Panc1 (cell line): ENCODE measurements at regions of chr18 and their contacts with region 1.

Region 1: GRCh38 chr18:46946656-46947282 is 29.4 kb downstream of the KATNAL2 start:
- DNase-seq: no peak
- ATAC-seq: no peak
- H3K4me3 ChIP-seq: peak overlapping the region in 1 of 2 experiments; percentile 41; a peak in 1 of 4 replicates
- H3K27ac ChIP-seq: no peak overlapping the region
- H3K4me1 ChIP-seq: no peaks in the 10 kb centered on the region
- H3K27me3 ChIP-seq: no peaks in the 10 kb centered on the region
- CTCF ChIP-seq: no peak

Region 2: DNA sequence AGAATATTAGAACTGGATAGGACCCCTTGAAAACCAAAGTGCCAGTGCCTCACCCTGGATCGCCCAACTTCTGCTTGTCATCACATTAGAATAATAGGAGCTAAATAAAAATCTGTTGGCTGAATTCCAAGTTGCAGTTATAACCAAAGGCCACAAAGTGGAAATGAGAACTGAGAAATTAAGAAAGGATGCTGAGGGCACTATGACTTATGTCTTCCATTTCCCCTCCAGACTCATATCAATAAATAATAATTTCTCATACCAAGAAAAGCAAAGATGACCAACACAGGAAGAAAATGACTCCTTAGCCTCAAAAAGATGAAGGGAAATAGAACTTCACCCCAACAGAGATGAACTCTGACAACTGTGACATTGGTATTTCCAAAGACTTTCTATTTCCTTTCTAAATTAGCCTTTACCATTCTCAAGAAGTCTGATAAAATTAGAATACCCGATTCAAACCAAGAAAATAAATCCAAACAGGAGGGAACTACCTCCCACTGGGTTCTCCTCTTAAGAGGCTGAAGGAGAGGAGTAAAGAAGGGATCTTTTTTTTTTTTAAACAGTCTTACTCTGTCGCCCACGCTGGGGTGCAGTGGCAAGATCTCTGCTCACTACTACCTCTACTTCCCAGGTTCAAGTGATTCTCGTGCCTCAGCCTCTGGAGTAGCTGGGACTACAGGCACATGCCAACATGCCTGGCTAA is 933.1 kb before region 1 on chr18:
- CTCF ChIA-PET with region 1: no interaction called
- POLR2A ChIA-PET with region 1: no interaction called
- in situ Hi-C with region 1: no loop called
- intact Hi-C with region 1: no loop called
- DNase-seq: no peak
- ATAC-seq: no peak
- H3K4me3 ChIP-seq: no peak overlapping the region
- H3K27ac ChIP-seq: no peak overlapping the region
- H3K4me1 ChIP-seq: no peaks in the 10 kb centered on the region
- H3K27me3 ChIP-seq: no peaks in the 10 kb centered on the region
- CTCF ChIP-seq: no peak

Region 3: GRCh38 chr18:46677611-46678010 is 269.2 kb before region 1 on chr18:
- CTCF ChIA-PET with region 1: no interaction called
- POLR2A ChIA-PET with region 1: no interaction called
- in situ Hi-C with region 1: no loop called
- intact Hi-C with region 1: no loop called
- DNase-seq: no peak
- ATAC-seq: no peak
- H3K4me3 ChIP-seq: no peak overlapping the region
- H3K27ac ChIP-seq: peak overlapping the region; percentile 59; the same call in 1 of the 2 replicates
- H3K4me1 ChIP-seq: peaks cover 10% of the 10 kb centered on the region
- H3K27me3 ChIP-seq: no peaks in the 10 kb centered on the region
- CTCF ChIP-seq: no peak

Region 4: DNA sequence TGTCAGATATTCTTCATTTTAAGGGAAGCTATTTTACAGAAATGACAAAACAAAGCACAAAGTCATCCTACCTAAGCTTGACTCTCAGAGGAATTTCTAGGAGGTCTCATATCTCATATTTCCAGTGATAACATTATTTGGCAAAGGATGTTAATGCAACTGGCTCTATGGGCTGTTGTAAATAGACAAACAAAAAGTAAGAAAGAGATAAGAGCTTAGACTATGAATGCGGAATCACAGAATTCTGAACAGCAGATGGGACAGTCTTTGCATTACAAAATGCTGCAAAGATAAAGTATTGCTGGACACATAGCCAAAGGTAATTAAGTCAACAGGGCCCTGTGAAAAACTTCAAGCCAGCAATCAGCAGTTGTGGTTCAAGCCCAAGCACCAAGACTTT is 53.4 kb before region 1 on chr18:
- CTCF ChIA-PET with region 1: no interaction called
- POLR2A ChIA-PET with region 1: interaction called, 12 read pairs
- in situ Hi-C with region 1: no loop called
- intact Hi-C with region 1: no loop called
- DNase-seq: no peak
- ATAC-seq: no peak
- H3K4me3 ChIP-seq: no peak overlapping the region
- H3K27ac ChIP-seq: no peak overlapping the region
- H3K4me1 ChIP-seq: no peaks in the 10 kb centered on the region; the same call in 1 of the 2 replicates
- H3K27me3 ChIP-seq: no peaks in the 10 kb centered on the region
- CTCF ChIP-seq: no peak

Region 5: GRCh38 chr18:46903406-46903805 is 43.4 kb before region 1 on chr18:
- CTCF ChIA-PET with region 1: no interaction called
- POLR2A ChIA-PET with region 1: no interaction called
- in situ Hi-C with region 1: no loop called
- intact Hi-C with region 1: no loop called
- DNase-seq: no peak
- ATAC-seq: no peak
- H3K4me3 ChIP-seq: no peak overlapping the region
- H3K27ac ChIP-seq: no peak overlapping the region
- H3K4me1 ChIP-seq: no peaks in the 10 kb centered on the region
- H3K27me3 ChIP-seq: no peaks in the 10 kb centered on the region
- CTCF ChIP-seq: no peak